KBM-7 (cell line): ENCODE measurements at regions of chr7 and their contacts with region 1.

Region 1: GRCh38 chr7:105652359-105652993 is 71.2 kb upstream of the EFCAB10 start:
- DNase-seq: peak; percentile 57

Region 2: GRCh38 chr7:106041140-106041717 is 388.8 kb after region 1 on chr7:
- in situ Hi-C with region 1: loop called (anchors 25 kb)
- DNase-seq: peak; percentile 58

Region 3: DNA sequence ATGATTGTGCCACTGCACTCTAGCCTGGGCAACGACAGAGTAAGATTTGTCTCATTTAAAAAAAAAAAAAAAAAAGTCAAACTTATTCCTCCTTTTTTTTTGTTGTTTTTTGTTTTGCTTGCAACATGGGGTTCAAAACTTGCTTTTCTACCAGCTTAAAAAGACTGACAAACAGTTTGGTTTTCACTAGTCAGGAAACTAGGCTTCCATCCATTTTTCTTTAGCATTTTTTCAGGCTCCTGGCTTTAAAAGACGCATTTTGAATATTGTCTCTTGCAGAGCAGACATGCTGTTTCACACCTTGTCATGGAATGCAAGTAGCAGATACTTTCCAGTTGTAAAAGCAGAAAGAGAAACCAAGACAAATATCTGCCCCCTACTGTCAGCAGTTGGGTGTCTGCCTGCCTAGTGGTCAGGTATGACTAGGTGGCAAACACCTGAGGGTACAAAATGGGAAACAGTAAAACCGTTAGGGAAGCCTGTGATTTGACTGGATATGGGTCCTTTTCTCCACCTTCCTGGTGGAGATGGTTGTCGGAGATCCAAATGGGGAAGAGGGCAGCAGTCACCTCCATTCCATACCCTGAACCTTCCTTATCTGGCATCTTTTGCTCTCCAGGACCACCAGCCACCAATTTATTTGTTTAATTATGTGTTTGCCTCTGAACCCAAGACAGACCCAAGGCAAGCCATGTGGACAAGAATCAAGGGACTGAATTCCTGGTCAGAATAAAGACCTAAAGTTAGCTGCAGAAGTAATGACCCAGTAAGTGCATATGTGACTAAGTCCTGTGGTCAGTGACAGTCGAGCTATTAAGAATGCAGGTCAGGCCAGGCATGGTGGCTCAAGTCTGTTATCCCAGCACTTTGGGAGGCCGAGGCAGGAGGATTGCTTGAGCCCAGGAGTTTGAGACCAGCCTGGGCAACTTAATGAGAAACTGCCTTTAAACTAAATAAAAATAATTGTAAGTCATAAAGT is 868.8 kb after region 1 on chr7:
- in situ Hi-C with region 1: no loop called
- DNase-seq: no peak